ENCODE measurements at regions of chr3 and their contacts with region 1.

Region 1: DNA sequence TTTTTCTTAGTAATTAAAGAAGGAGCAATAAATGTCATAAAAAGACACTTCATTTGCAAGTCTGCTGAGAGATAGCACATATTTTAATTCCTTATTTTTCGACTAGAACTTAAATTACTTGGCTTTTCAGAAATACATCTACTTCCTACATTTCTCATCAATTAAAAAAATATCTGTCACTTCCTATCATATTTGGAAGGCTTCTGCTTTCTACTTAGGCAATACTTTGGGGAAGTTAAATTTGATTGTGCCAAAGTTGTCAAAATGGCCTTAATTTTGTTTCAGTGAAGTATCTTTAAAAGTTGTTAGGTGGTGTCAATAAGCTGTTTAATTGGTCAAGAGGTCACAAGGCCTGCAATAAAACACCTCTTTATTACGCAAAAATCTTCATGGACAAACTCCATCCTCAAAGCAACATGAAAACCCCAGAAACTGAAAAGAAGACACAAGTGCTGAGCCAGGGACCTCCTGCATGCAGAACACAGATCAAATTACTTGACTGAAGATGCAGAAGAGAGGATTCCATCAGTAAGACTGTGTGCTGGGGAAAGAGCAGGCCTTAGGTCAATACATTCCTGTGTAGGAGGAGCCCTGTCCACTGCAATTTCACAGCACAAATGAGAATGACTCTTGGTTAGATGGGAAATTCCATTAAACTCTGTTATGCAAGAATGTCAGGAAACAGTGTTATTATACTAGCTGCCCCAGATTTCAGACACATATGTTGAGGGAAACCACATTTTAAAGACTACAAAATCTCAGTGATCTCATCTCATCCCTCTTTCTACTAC is 48.0 kb upstream of the FSTL1 start:
- DNase-seq: no peak
- ATAC-seq: peak; percentile 64
- H3K4me3 ChIP-seq: no peak overlapping the region
- H3K27ac ChIP-seq: peak overlapping the region in 1 of 2 donors; percentile 25
- H3K4me1 ChIP-seq: peaks cover 0 to 1% of the 10 kb centered on the region in 2 donors
- H3K27me3 ChIP-seq: no peaks in the 10 kb centered on the region

Region 2: GRCh38 chr3:120450600-120451271 is 48.0 kb before region 1 on chr3 and contains the start of gene FSTL1:
- intact Hi-C with region 1: loop called (anchors 5 kb)
- DNase-seq: peak; percentile 79 to 91
- ATAC-seq: peak; percentile 86
- H3K4me3 ChIP-seq: peak within 1 kb of the TSS; percentile 90 to 98
- H3K27ac ChIP-seq: peak within 1 kb of the TSS; percentile 90 to 97
- H3K4me1 ChIP-seq: peaks cover 0 to 8% of the 10 kb centered on the region in 2 donors
- H3K27me3 ChIP-seq: no peaks in the 10 kb centered on the region
- total RNA-seq, gene FSTL1: 716 to 833 TPM

Region 3: GRCh38 chr3:120460862-120461261 is 37.9 kb before region 1 on chr3:
- intact Hi-C with region 1: loop called in 1 of 2 experiments (anchors 5 kb)
- DNase-seq: no peak
- ATAC-seq: no peak
- H3K4me3 ChIP-seq: no peak overlapping the region
- H3K27ac ChIP-seq: no peak overlapping the region
- H3K4me1 ChIP-seq: no peaks in the 10 kb centered on the region
- H3K27me3 ChIP-seq: no peaks in the 10 kb centered on the region

Region 4: DNA sequence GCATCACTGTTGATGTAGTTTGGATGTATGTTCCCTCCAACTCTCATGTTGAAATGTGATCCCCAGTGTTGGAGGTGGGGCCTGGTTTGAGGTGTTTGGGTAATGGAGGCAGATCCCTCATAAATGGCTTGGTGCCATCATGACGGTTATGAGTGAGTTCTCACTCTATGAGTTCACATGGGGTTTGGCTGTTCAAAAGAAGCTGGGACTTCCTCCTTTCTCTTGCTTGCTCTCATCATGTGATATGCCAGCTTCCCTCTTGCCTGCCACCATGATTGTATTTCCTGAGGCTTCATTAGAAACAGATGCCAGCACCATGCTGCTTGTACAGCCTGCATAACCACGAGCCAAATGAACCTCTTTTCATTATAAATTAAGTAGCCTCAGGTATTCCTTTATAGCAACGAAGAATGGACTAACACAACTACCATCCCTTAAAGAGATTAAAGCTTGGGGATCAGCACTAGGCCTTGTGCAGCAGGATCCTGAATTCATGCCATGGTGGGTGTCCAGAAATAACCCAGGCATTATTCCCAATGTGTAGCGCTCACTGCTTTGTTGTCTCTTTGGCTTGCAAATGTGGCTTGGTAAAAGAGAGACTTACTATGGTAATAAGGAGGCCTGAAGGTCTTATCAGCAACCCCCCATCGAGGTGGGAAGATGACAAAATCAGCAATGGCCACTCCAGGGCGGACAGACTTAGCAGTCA is 139.3 kb after region 1 on chr3:
- intact Hi-C with region 1: no loop called
- DNase-seq: no peak
- ATAC-seq: no peak
- H3K4me3 ChIP-seq: no peak overlapping the region
- H3K27ac ChIP-seq: no peak overlapping the region
- H3K4me1 ChIP-seq: no peaks in the 10 kb centered on the region
- H3K27me3 ChIP-seq: no peaks in the 10 kb centered on the region

Measured in aorta (tissue), 5 donors.